ENCODE measurements at regions of chr11 and their contacts with region 1.

Region 1: GRCh38 chr11:75867775-75868374 is 52.9 kb downstream of the UVRAG start:
- DNase-seq: peak; percentile 43
- ATAC-seq: peak; percentile 47; the same call in 2 of the 3 replicates
- H3K4me3 ChIP-seq: no peak overlapping the region
- H3K27ac ChIP-seq: no peak overlapping the region
- H3K4me1 ChIP-seq: no peaks in the 10 kb centered on the region
- H3K27me3 ChIP-seq: no peaks in the 10 kb centered on the region
- CTCF ChIP-seq: peak; percentile 71
- EP300 ChIP-seq: no peak
- POLR2A ChIP-seq: no peak
- RAD21 ChIP-seq: peak; percentile 68

Region 2: DNA sequence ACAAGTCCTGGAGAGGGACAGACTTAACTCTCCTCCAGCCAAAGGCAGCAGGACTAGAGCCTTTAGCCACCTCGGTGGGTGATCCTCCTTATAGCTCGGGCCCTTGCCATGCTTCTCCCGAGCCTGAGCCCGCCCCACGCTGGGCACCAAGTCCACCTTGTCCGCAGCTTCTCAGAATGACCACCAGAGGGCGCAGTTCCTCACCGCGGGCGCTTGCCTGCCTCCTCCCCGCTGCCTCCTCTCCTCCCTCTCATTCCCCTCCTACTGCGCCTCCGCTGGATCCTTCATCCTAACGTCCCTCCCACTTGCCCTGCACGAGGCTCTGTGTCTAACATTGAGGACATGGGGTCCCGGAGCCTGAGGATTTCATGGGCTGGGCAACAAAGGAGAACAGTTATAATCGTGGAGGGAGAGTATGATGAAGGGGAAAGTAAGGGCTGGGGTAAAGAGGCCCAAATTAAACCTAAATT is 161.6 kb before region 1 on chr11:
- CTCF ChIA-PET with region 1: interaction called, 5 read pairs
- POLR2A ChIA-PET with region 1: no interaction called
- in situ Hi-C with region 1: no loop called
- intact Hi-C with region 1: loop called (anchors 5 kb)
- DNase-seq: peak; percentile 65
- ATAC-seq: peak; percentile 98
- H3K4me3 ChIP-seq: peak overlapping the region in 2 of 3 experiments; percentile 5 to 55; a peak in 2 of 6 replicates
- H3K27ac ChIP-seq: no peak overlapping the region
- H3K4me1 ChIP-seq: peaks cover 15% of the 10 kb centered on the region
- H3K27me3 ChIP-seq: no peaks in the 10 kb centered on the region; a peak in 1 of 5 replicates
- CTCF ChIP-seq: peak; percentile 99
- EP300 ChIP-seq: no peak
- POLR2A ChIP-seq: no peak
- RAD21 ChIP-seq: peak; percentile 88

Measured in HepG2 (cell line).